Activated naive CD4-positive, alpha-beta T cell treated with anti-CD3 and anti-CD28 coated beads for 36 hours (primary cell): ENCODE measurements at regions of chr13 and their contacts with region 1.

Region 1: GRCh38 chr13:108155185-108156106 is 59.9 kb downstream of the LIG4 start:
- DNase-seq: peak; percentile 74
- H3K4me3 Mint-ChIP-seq: no peak overlapping the region
- H3K27ac Mint-ChIP-seq: no peak overlapping the region
- H3K4me1 Mint-ChIP-seq: no peaks in the 10 kb centered on the region
- H3K27me3 Mint-ChIP-seq: peaks cover 13% of the 10 kb centered on the region

Region 2: DNA sequence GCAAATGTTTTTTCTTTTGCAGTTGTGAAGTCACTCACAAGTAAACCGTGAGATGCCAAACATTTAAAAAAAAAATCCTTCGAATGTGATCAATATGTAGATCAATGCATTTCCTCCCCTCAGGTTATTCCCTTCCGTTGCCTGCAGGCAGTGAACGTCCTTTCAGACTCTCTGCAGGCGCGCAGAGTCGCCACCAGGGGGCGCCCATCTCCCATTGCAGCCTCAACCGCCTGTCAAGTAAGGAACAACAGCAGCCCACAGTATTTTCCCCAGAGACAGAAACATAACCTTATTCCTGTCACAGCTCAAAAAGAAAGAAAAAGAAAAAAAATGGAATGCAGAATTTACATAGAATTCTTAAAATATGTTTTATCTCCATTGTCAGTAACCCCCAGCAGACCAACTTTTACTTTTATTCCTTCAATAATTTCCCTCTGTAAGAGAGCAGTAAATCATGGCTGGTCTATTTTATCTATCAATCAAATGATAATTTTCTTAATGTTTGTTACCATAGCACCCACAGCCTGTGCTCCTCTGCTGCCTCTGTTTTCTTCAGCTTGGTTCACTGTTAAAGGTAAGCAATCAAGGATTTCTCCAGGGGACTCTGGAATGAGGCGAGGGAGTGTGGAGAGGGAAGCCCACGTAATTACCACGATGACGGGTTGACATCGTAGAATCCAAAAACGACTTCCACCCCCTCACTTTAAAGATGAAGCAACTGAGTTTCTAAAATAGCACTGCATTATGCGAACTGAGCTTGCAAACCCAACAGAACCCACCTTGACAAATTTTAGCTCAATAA is 949.9 kb before region 1 on chr13:
- CTCF ChIA-PET with region 1: interaction called, 20 read pairs
- intact Hi-C with region 1: loop called (anchors 1 kb)
- DNase-seq: peak; percentile 67
- H3K4me3 Mint-ChIP-seq: no peak overlapping the region
- H3K27ac Mint-ChIP-seq: no peak overlapping the region
- H3K4me1 Mint-ChIP-seq: no peaks in the 10 kb centered on the region
- H3K27me3 Mint-ChIP-seq: peaks cover 18% of the 10 kb centered on the region

Region 3: GRCh38 chr13:107258599-107259187 is 896.8 kb before region 1 on chr13:
- CTCF ChIA-PET with region 1: no interaction called
- intact Hi-C with region 1: no loop called
- DNase-seq: no peak
- H3K4me3 Mint-ChIP-seq: no peak overlapping the region
- H3K27ac Mint-ChIP-seq: no peak overlapping the region
- H3K4me1 Mint-ChIP-seq: no peaks in the 10 kb centered on the region
- H3K27me3 Mint-ChIP-seq: peaks cover 2% of the 10 kb centered on the region

Region 4: GRCh38 chr13:108111002-108111401 is 44.4 kb before region 1 on chr13:
- CTCF ChIA-PET with region 1: no interaction called
- intact Hi-C with region 1: no loop called
- DNase-seq: no peak
- H3K4me3 Mint-ChIP-seq: no peak overlapping the region
- H3K27ac Mint-ChIP-seq: no peak overlapping the region
- H3K4me1 Mint-ChIP-seq: no peaks in the 10 kb centered on the region
- H3K27me3 Mint-ChIP-seq: peaks cover 7% of the 10 kb centered on the region

Region 5: DNA sequence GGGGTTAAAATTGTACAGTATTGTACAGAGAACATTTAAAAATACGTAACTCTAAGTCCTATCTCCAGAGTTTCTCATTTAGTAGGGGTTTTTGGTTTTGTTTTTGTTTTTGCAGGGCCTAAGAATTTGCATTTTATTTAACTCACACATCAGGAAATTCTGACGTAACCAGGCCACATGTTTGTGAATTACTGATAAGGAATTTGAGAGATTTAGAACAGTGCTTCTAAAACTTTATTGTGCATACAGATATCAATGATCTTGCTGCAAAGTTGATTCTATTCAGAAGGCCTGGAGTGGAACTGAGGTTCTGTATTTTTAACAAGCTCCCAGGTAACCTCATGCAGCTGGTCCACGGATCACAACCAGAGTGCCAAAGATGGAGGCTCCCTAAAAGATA is 10.6 kb after region 1 on chr13:
- CTCF ChIA-PET with region 1: interaction called, 13 read pairs
- intact Hi-C with region 1: no loop called
- DNase-seq: no peak
- H3K4me3 Mint-ChIP-seq: no peak overlapping the region
- H3K27ac Mint-ChIP-seq: no peak overlapping the region
- H3K4me1 Mint-ChIP-seq: no peaks in the 10 kb centered on the region
- H3K27me3 Mint-ChIP-seq: peaks cover 6% of the 10 kb centered on the region

Region 6: GRCh38 chr13:108342369-108343289 is 187.2 kb after region 1 on chr13:
- CTCF ChIA-PET with region 1: no interaction called
- intact Hi-C with region 1: no loop called
- DNase-seq: peak; percentile 28
- H3K4me3 Mint-ChIP-seq: peak overlapping the region; percentile 4
- H3K27ac Mint-ChIP-seq: peak overlapping the region; percentile 56
- H3K4me1 Mint-ChIP-seq: peaks cover 24% of the 10 kb centered on the region
- H3K27me3 Mint-ChIP-seq: no peaks in the 10 kb centered on the region